ENCODE measurements at regions of chr10 and their contacts with region 1.

Region 1: GRCh38 chr10:103966671-103967447 is at the start of gene SLK:
- DNase-seq: peak; percentile 89 to 96
- ATAC-seq: peak; percentile 88 to 96 (median 91)
- H3K4me3 ChIP-seq: peak within 1 kb of the TSS; percentile 96
- H3K4me3 Mint-ChIP-seq: peak within 1 kb of the TSS; percentile 95
- H3K27ac ChIP-seq: peak within 1 kb of the TSS; percentile 88
- H3K27ac Mint-ChIP-seq: peak within 1 kb of the TSS; percentile 90 to 92
- H3K4me1 ChIP-seq: peaks cover 19% of the 10 kb centered on the region
- H3K4me1 Mint-ChIP-seq: peaks cover 35 to 36% of the 10 kb centered on the region in 2 donors
- H3K27me3 ChIP-seq: no peaks in the 10 kb centered on the region
- H3K27me3 Mint-ChIP-seq: no peaks in the 10 kb centered on the region
- CTCF ChIP-seq: no peak
- total RNA-seq, gene SLK: 33.4 to 48.7 (median 40.3) TPM

Region 2: GRCh38 chr10:103918053-103918846 is 48.6 kb before region 1 on chr10 and contains the start of gene STN1:
- intact Hi-C with region 1: loop called (anchors 2 kb)
- DNase-seq: peak; percentile 88 to 97
- ATAC-seq: peak; percentile 89 to 98 (median 92)
- H3K4me3 ChIP-seq: peak within 1 kb of the TSS; percentile 71
- H3K4me3 Mint-ChIP-seq: peak within 1 kb of the TSS; percentile 96
- H3K27ac ChIP-seq: peak within 1 kb of the TSS; percentile 69
- H3K27ac Mint-ChIP-seq: peak within 1 kb of the TSS; percentile 94 to 97
- H3K4me1 ChIP-seq: peaks cover 41% of the 10 kb centered on the region
- H3K4me1 Mint-ChIP-seq: peaks cover 34 to 40% of the 10 kb centered on the region in 2 donors
- H3K27me3 ChIP-seq: no peaks in the 10 kb centered on the region
- H3K27me3 Mint-ChIP-seq: no peaks in the 10 kb centered on the region
- CTCF ChIP-seq: no peak
- total RNA-seq, gene STN1: 31.7 to 53.4 (median 34.0) TPM

Region 3: GRCh38 chr10:103983367-103983911 is 16.6 kb after region 1 on chr10:
- intact Hi-C with region 1: loop called (anchors 1 kb)
- DNase-seq: peak in 1 of 2 donors; percentile 65
- ATAC-seq: peak; percentile 74 to 87 (median 83)
- H3K4me3 ChIP-seq: no peak overlapping the region
- H3K4me3 Mint-ChIP-seq: peak overlapping the region; percentile 86
- H3K27ac ChIP-seq: peak overlapping the region; percentile 46
- H3K27ac Mint-ChIP-seq: peak overlapping the region; percentile 89 to 91
- H3K4me1 ChIP-seq: peaks cover 20% of the 10 kb centered on the region
- H3K4me1 Mint-ChIP-seq: peaks cover 65 to 70% of the 10 kb centered on the region in 2 donors
- H3K27me3 ChIP-seq: no peaks in the 10 kb centered on the region
- H3K27me3 Mint-ChIP-seq: no peaks in the 10 kb centered on the region
- CTCF ChIP-seq: no peak

Measured in natural killer cell (primary cell).